Tibial artery (tissue), 4 donors: ENCODE measurements at regions of chr6 and their contacts with region 1.

Region 1: GRCh38 chr6:33014841-33015634 is 5.6 kb upstream of the HLA-DOA start:
- DNase-seq: no peak
- H3K4me3 ChIP-seq: no peak overlapping the region
- H3K27ac ChIP-seq: no peak overlapping the region
- H3K4me1 ChIP-seq: peaks cover 0 to 20% (median 5%) of the 10 kb centered on the region in 4 donors
- H3K27me3 ChIP-seq: peaks cover 0 to 29% of the 10 kb centered on the region in 2 donors
- CTCF ChIP-seq: peak; percentile 78 to 81

Region 2: GRCh38 chr6:33091957-33092356 is 76.9 kb after region 1 on chr6:
- intact Hi-C with region 1: loop called (anchors 5 kb)
- DNase-seq: peak in 1 of 2 donors; percentile 38
- H3K4me3 ChIP-seq: no peak overlapping the region
- H3K27ac ChIP-seq: no peak overlapping the region
- H3K4me1 ChIP-seq: no peaks in the 10 kb centered on the region
- H3K27me3 ChIP-seq: peaks cover 0 to 24% of the 10 kb centered on the region in 2 donors
- CTCF ChIP-seq: peak; percentile 29 to 33

Region 3: GRCh38 chr6:33126101-33126714 is 111.2 kb after region 1 on chr6:
- intact Hi-C with region 1: loop called (anchors 10 kb)
- DNase-seq: peak in 1 of 2 donors; percentile 66
- H3K4me3 ChIP-seq: no peak overlapping the region
- H3K27ac ChIP-seq: no peak overlapping the region
- H3K4me1 ChIP-seq: no peaks in the 10 kb centered on the region
- H3K27me3 ChIP-seq: peaks cover 0 to 21% of the 10 kb centered on the region in 2 donors
- CTCF ChIP-seq: peak; percentile 38 to 55

Region 4: DNA sequence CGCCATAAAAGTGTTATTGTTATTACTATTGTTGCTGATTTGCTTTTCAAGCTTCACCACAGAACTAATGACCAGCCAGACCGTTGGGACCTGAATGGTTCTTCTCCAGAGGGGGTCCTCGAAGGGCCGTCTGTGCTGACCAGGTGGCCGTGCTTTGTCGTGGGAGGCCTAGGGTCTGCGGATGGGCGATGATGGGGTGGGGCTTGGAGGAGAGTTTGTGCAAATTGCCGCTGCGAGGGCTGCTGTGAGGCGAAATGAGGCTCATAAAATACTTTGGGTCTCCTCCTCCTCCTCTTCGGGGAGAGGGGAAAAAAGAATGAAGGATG is 308.5 kb after region 1 on chr6:
- intact Hi-C with region 1: no loop called
- DNase-seq: no peak
- H3K4me3 ChIP-seq: peak overlapping the region; percentile 64 to 93
- H3K27ac ChIP-seq: peak overlapping the region; percentile 83 to 94
- H3K4me1 ChIP-seq: peaks cover 0 to 45% (median 40%) of the 10 kb centered on the region in 4 donors
- H3K27me3 ChIP-seq: no peaks in the 10 kb centered on the region
- CTCF ChIP-seq: no peak